Activated CD4-positive, alpha-beta T cell treated with anti-CD3 and anti-CD28 coated beads for 36 hours (primary cell): ENCODE measurements at regions of chr19 and their contacts with region 1.

Region 1: GRCh38 chr19:15154002-15154612 is 46.7 kb downstream of the NOTCH3 start:
- DNase-seq: peak; percentile 70
- ATAC-seq: peak; percentile 64
- H3K4me3 Mint-ChIP-seq: no peak overlapping the region
- H3K27ac Mint-ChIP-seq: no peak overlapping the region
- H3K4me1 Mint-ChIP-seq: peaks cover 5% of the 10 kb centered on the region
- H3K27me3 Mint-ChIP-seq: peaks cover 3% of the 10 kb centered on the region

Region 2: GRCh38 chr19:14735915-14736314 is 418.2 kb before region 1 on chr19:
- CTCF ChIA-PET with region 1: no interaction called
- POLR2A ChIA-PET with region 1: no interaction called
- intact Hi-C with region 1: no loop called
- DNase-seq: no peak
- ATAC-seq: no peak
- H3K4me3 Mint-ChIP-seq: no peak overlapping the region
- H3K27ac Mint-ChIP-seq: no peak overlapping the region
- H3K4me1 Mint-ChIP-seq: no peaks in the 10 kb centered on the region
- H3K27me3 Mint-ChIP-seq: no peaks in the 10 kb centered on the region

Region 3: GRCh38 chr19:14871619-14872230 is 282.4 kb before region 1 on chr19:
- CTCF ChIA-PET with region 1: no interaction called
- POLR2A ChIA-PET with region 1: no interaction called
- intact Hi-C with region 1: loop called in 1 of 2 experiments (anchors 2 kb)
- DNase-seq: no peak
- ATAC-seq: no peak
- H3K4me3 Mint-ChIP-seq: no peak overlapping the region
- H3K27ac Mint-ChIP-seq: no peak overlapping the region
- H3K4me1 Mint-ChIP-seq: no peaks in the 10 kb centered on the region
- H3K27me3 Mint-ChIP-seq: peaks cover 33% of the 10 kb centered on the region

Region 4: DNA sequence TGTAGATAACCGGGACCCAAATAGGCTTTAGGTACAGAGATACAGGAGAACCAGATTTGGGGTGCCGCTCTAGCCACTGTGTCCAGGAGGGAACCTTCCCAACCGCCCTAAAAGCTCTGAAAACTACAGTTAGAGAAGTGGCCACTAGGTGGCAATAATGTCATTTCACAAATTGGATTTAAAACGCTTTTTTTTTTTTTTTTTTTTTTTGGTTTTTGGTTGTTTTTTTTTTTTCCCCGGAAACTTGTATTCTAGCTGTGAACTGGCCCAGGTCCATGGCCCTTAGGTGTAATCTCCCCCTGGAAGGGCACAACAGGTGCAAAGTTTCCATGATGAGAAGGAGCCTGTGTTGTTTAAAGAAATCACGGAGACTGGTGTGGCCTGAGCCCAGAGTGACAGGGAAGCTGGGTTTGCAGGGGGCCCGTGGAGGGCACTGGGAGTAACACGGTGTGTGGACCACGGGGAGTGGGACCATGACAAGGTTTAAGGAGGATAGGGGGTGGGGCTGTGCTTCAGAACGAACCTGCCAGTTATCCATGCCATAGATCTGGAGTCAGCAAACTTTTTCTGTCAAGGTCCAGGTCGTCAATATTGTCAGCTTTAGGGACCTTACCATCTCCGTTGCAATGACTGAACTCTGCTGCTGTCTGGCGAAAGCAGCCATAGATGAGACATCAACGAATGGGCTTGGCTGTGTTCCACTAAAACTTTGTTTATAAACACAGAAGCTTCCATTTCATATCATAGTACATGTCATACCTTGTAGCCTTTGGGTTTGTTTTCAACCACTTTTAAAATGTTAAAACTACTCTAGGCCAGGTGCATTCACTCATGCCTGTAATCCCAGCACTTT is 62.0 kb before region 1 on chr19:
- CTCF ChIA-PET with region 1: interaction called, 26 read pairs
- POLR2A ChIA-PET with region 1: no interaction called
- intact Hi-C with region 1: loop called (anchors 1 kb)
- DNase-seq: peak; percentile 60
- ATAC-seq: peak; percentile 63
- H3K4me3 Mint-ChIP-seq: no peak overlapping the region
- H3K27ac Mint-ChIP-seq: no peak overlapping the region
- H3K4me1 Mint-ChIP-seq: peaks cover 5% of the 10 kb centered on the region
- H3K27me3 Mint-ChIP-seq: peaks cover 8% of the 10 kb centered on the region

Region 5: GRCh38 chr19:15101479-15102082 is 52.5 kb before region 1 on chr19:
- CTCF ChIA-PET with region 1: interaction called, 36 read pairs
- POLR2A ChIA-PET with region 1: no interaction called
- intact Hi-C with region 1: loop called (anchors 1 kb)
- DNase-seq: peak; percentile 80
- ATAC-seq: peak; percentile 95
- H3K4me3 Mint-ChIP-seq: no peak overlapping the region
- H3K27ac Mint-ChIP-seq: no peak overlapping the region
- H3K4me1 Mint-ChIP-seq: peaks cover under 1% of the 10 kb centered on the region
- H3K27me3 Mint-ChIP-seq: peaks cover 6% of the 10 kb centered on the region